PC-9 (cell line): ENCODE measurements at regions of chr11 and their contacts with region 1.

Region 1: GRCh38 chr11:116821050-116821918 is 1.8 kb downstream of the APOA4 start:
- DNase-seq: no peak
- H3K4me3 ChIP-seq: no peak overlapping the region
- H3K27ac ChIP-seq: no peak overlapping the region
- H3K4me1 ChIP-seq: no peaks in the 10 kb centered on the region
- H3K27me3 ChIP-seq: no peaks in the 10 kb centered on the region
- CTCF ChIP-seq: no peak

Region 2: GRCh38 chr11:116678887-116679286 is 142.4 kb before region 1 on chr11:
- CTCF ChIA-PET with region 1: no interaction called
- POLR2A ChIA-PET with region 1: no interaction called
- intact Hi-C with region 1: no loop called
- DNase-seq: no peak
- H3K4me3 ChIP-seq: no peak overlapping the region
- H3K27ac ChIP-seq: no peak overlapping the region
- H3K4me1 ChIP-seq: no peaks in the 10 kb centered on the region
- H3K27me3 ChIP-seq: peaks cover 27% of the 10 kb centered on the region; the same call in 1 of the 2 replicates
- CTCF ChIP-seq: no peak

Region 3: DNA sequence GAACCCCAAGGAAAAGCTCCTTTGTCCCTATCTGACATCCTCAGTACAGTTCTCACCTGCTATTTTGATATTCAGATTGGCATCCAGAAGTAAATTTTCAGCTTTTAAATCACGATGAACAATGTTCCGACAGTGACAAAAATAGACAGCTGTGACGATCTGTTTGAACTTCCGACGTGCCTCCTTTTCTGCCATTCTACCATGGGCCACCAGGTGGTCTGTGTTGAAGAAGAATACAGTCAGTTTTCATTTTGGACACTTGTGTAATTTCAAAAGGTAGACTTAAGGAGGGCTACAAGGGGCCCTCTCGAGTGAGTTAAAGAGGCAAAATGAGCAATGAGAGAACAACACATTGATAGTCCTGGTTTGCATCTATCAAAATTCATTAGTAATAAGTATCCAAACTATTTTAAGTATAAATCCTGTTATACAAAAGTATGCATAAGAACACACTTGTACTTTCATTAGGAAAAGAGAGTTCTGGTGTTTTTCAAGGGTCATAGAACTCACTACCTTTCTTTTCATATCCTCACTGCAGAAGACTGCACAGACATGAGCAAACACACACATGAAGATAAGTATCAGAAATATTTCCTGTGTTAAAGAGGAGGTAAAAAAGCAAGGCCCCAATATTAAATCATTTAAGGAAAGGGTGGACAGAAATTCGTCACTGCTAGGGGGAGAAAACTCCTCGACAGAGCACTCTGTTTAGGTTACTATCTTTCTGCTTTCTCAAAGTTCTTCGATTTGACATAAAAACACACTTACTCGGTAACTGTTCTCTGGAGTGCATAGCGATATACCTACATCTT is 106.1 kb after region 1 on chr11:
- CTCF ChIA-PET with region 1: no interaction called
- POLR2A ChIA-PET with region 1: no interaction called
- intact Hi-C with region 1: no loop called
- DNase-seq: no peak
- H3K4me3 ChIP-seq: no peak overlapping the region
- H3K27ac ChIP-seq: no peak overlapping the region
- H3K4me1 ChIP-seq: peaks cover 8% of the 10 kb centered on the region
- H3K27me3 ChIP-seq: no peaks in the 10 kb centered on the region
- CTCF ChIP-seq: peak; percentile 56

Region 4: GRCh38 chr11:117178210-117179034 is 357.1 kb after region 1 on chr11 and contains the start of gene SIDT2:
- CTCF ChIA-PET with region 1: no interaction called
- POLR2A ChIA-PET with region 1: interaction called, 37 read pairs
- intact Hi-C with region 1: no loop called
- DNase-seq: peak; percentile 85 to 87
- H3K4me3 ChIP-seq: peak within 1 kb of the TSS; percentile 63
- H3K27ac ChIP-seq: no peak within 1 kb of the TSS
- H3K4me1 ChIP-seq: peaks cover 19% of the 10 kb centered on the region
- H3K27me3 ChIP-seq: no peaks in the 10 kb centered on the region
- CTCF ChIP-seq: no peak
- total RNA-seq, gene SIDT2: 20.1 and 20.3 TPM in 2 replicates